ENCODE measurements at regions of chr15 and their contacts with region 1.

Region 1: DNA sequence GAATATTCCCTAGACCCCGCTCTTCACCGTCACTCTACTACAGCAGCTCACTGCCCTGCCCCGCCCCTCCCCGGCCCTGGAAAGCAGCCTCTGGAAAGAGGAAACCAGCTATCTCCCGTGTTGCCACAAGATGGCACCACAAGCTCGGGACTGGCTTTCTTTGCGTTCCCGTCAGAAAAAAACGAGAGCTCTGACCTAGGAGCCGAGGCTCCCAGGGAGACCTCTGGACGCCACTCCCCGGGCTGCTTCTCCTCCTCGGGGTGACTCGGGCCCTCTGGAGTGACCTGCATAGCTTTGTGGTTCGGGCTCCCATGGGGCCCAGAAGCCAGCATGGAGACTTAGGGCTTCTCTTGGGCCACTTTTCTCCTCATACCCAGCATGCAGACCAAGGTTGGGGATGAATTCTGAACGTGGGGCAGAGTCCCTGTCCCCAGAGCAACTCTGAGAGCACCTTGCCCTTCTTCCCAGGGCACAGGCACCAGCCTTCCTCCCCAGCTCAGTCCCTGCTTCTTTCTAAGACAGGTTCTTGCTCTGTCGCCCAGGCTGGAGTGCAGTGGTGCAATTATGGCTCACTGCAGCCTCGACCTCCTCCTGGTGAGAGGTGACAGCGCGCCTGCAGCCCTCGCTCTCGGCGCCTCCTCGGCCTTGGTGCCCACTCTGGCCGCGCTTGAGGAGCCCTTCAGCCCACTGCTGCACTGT is 19.0 kb downstream of the STOML1 start:
- DNase-seq: peak; percentile 54 to 92
- H3K4me3 ChIP-seq: peak overlapping the region in 1 of 4 experiments; percentile 44; a peak in 1 of 8 replicates
- H3K27ac ChIP-seq: no peak overlapping the region
- H3K4me1 ChIP-seq: peaks cover 0 to 8% (median 2%) of the 10 kb centered on the region in 4 experiments; a peak in 4 of 7 replicates
- H3K27me3 ChIP-seq: peaks cover 0 to 4% (median 2%) of the 10 kb centered on the region in 4 experiments; a peak in 3 of 7 replicates
- CTCF ChIP-seq: peak; percentile 82 to 94 (median 91)
- EP300 ChIP-seq: no peak
- POLR2A ChIP-seq: no peak
- RAD21 ChIP-seq: peak; percentile 97 to 99

Region 2: DNA sequence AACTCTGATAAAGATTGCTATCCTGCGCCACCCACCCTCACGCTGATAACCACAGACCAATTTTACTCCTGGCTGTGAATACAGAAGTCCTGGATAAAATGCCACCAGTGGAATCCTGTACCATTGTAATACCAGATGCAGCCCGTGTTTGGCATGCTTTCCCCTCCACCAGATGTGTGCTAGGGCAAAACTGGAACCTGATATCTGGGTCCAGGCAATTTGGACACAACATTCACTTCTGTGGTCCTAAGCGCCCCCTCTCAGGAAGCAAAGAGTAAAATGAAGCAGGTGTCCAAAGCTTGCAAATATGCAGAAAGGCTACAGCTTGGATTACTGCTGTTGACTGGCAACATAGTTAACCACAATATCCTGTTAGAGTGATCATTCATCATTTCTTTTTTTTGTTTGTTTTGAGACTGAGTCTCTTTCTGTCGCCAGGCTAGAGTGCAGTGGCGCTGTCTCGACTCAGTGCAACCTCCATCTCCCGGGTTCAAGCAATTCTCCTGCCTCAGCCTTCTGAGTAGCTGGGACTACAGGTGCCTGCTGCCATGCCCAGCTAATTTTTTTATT is 14.0 kb before region 1 on chr15:
- CTCF ChIA-PET with region 1: interaction called, 24 read pairs
- POLR2A ChIA-PET with region 1: no interaction called
- DNase-seq: no peak
- H3K4me3 ChIP-seq: no peak overlapping the region
- H3K27ac ChIP-seq: no peak overlapping the region
- H3K4me1 ChIP-seq: no peaks in the 10 kb centered on the region
- H3K27me3 ChIP-seq: no peaks in the 10 kb centered on the region
- CTCF ChIP-seq: no peak
- EP300 ChIP-seq: no peak
- POLR2A ChIP-seq: no peak
- RAD21 ChIP-seq: no peak

Region 3: DNA sequence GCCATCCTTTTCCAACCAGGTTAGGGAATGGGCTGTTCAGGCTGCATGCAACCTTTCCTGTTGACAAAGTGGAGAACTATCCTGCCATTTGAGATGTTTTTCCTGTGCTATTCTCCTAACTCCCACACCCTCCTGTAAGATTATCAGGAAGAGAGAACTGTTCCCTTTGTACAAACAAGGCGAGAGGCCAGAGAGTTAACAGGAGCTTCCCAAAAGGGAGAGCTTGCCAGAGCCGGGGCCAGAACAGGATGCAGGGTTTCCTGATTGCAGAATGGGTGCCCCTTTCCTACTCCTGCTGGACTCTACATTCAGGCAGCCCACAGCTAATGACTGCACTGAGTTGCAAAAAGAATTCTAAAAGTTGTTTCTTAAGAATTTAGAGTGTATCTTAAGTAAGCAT is 38.5 kb after region 1 on chr15:
- CTCF ChIA-PET with region 1: interaction called, 18 read pairs
- POLR2A ChIA-PET with region 1: no interaction called
- DNase-seq: no peak
- H3K4me3 ChIP-seq: no peak overlapping the region
- H3K27ac ChIP-seq: no peak overlapping the region
- H3K4me1 ChIP-seq: no peaks in the 10 kb centered on the region
- H3K27me3 ChIP-seq: no peaks in the 10 kb centered on the region
- CTCF ChIP-seq: no peak
- EP300 ChIP-seq: no peak
- POLR2A ChIP-seq: no peak
- RAD21 ChIP-seq: no peak

Region 4: GRCh38 chr15:74036271-74037170 is 63.4 kb after region 1 on chr15:
- CTCF ChIA-PET with region 1: interaction called, 174 read pairs
- POLR2A ChIA-PET with region 1: no interaction called
- DNase-seq: peak; percentile 58 to 84
- H3K4me3 ChIP-seq: no peak overlapping the region
- H3K27ac ChIP-seq: no peak overlapping the region; the same call in 1 of the 2 replicates
- H3K4me1 ChIP-seq: peaks cover 0 to 7% (median 6%) of the 10 kb centered on the region in 4 experiments; a peak in 4 of 7 replicates
- H3K27me3 ChIP-seq: no peaks in the 10 kb centered on the region
- CTCF ChIP-seq: peak; percentile 68 to 88 (median 82)
- EP300 ChIP-seq: no peak
- POLR2A ChIP-seq: no peak
- RAD21 ChIP-seq: peak; percentile 60 to 73

Region 5: GRCh38 chr15:74108111-74108510 is 135.0 kb after region 1 on chr15:
- CTCF ChIA-PET with region 1: no interaction called
- POLR2A ChIA-PET with region 1: no interaction called
- DNase-seq: no peak
- H3K4me3 ChIP-seq: no peak overlapping the region
- H3K27ac ChIP-seq: no peak overlapping the region
- H3K4me1 ChIP-seq: no peaks in the 10 kb centered on the region
- H3K27me3 ChIP-seq: no peaks in the 10 kb centered on the region
- CTCF ChIP-seq: no peak
- EP300 ChIP-seq: no peak
- POLR2A ChIP-seq: no peak
- RAD21 ChIP-seq: no peak

Measured in H1 (cell line).